Posterior vena cava (tissue), 2 donors: ENCODE measurements at regions of chr19 and their contacts with region 1.

Region 1: DNA sequence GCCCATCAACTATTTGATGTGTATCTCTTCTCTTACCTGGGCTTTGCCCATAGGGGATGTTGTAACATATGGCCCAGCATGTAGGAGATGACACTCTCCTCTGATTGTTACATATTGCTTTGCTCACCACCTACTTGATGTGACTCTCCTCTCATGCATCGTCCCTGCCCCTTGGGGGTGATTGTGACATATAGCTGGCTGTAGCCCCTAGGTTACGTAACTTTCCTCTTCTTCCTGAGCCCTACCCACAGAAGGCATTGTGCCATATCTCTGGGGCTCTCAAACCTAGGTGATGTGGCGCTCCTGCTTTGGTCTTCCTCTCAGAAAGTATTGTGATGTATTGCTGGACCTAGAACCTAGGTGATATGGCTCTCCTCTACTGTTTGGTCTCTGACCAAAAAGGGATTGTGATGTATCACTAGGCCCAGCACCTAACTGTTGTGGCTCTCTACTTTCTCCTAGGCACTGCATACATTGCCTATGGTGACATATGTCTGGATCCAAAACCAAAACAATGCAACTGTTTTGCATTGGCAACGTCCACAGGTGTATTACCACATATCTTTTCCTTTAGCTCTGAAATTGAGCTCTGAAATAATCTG is 71.9 kb upstream of the ZNF724 start:
- DNase-seq: no peak

Region 2: GRCh38 chr19:23409392-23410048 is 87.5 kb after region 1 on chr19:
- intact Hi-C with region 1: no loop called
- DNase-seq: no peak

Region 3: DNA sequence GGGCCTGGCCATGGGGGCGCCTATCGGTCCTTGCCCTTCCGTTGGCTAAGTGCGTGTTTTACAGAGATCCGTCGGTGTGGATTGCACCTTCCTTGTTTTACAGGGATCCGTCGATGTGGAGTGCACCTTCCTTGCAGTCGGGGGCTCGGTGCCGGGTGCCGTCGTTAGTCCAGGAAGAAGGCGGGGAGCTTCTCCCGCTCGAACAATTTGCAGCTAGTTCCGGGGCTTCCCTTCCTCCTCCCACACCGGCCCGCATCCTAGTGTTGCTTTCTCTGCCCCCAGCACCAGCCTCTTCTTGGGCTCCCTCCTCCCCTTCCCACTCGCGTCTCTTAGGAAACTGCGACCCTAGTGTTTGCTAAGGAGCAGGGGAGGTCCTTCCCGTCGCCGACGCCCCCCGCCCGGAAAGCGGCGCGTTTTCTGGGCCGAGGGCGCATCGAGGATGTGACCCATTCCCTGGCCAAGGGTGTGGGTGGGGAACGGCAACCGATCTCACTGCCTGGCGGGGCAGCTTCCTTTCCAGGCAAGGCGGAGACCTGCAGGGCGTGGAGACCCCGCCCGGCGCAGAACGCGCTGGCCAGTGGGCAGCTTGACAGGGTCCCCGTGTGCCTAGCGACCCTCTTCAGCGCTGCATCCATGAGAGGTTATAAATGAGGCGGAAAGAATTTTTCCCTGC is 149.0 kb after region 1 on chr19:
- intact Hi-C with region 1: loop called in 1 of 2 experiments (anchors 5 kb)
- DNase-seq: no peak